Ascending aorta (tissue), 2 donors: ENCODE measurements at regions of chr18 and their contacts with region 1.

Region 1: DNA sequence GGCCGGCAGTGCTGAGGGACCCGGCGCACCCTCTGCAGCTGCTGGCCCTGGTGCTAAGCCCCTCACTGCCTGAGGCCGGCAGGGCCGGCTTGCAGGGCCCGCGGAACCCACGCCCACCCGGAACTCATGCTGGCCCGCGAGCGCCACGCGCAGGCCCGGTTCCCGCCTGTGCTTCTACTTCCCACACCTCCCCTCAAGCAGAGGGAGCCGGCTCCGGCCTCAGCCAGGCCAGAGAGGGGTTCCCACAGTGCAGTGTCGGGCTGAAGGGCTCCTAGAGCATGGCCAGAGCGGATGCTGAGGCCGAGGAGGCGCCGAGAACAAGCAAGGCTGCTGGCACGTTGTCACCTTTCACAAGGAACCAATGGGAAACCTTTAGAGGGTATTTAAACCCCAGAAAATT is 36.8 kb upstream of the ZNF532 start:
- DNase-seq: no peak
- H3K4me3 ChIP-seq: no peak overlapping the region
- H3K27ac ChIP-seq: peak overlapping the region; percentile 50 to 67
- H3K4me1 ChIP-seq: peaks cover 0 to 7% of the 10 kb centered on the region in 2 donors
- H3K27me3 ChIP-seq: no peaks in the 10 kb centered on the region
- CTCF ChIP-seq: no peak

Region 2: GRCh38 chr18:58808349-58808748 is 19.5 kb before region 1 on chr18:
- intact Hi-C with region 1: loop called (anchors 2 kb)
- DNase-seq: no peak
- H3K4me3 ChIP-seq: no peak overlapping the region
- H3K27ac ChIP-seq: no peak overlapping the region
- H3K4me1 ChIP-seq: peaks cover 3 to 9% of the 10 kb centered on the region in 2 donors
- H3K27me3 ChIP-seq: no peaks in the 10 kb centered on the region
- CTCF ChIP-seq: no peak